GM23248 (cell line): ENCODE measurements at regions of chr11 and their contacts with region 1.

Region 1: DNA sequence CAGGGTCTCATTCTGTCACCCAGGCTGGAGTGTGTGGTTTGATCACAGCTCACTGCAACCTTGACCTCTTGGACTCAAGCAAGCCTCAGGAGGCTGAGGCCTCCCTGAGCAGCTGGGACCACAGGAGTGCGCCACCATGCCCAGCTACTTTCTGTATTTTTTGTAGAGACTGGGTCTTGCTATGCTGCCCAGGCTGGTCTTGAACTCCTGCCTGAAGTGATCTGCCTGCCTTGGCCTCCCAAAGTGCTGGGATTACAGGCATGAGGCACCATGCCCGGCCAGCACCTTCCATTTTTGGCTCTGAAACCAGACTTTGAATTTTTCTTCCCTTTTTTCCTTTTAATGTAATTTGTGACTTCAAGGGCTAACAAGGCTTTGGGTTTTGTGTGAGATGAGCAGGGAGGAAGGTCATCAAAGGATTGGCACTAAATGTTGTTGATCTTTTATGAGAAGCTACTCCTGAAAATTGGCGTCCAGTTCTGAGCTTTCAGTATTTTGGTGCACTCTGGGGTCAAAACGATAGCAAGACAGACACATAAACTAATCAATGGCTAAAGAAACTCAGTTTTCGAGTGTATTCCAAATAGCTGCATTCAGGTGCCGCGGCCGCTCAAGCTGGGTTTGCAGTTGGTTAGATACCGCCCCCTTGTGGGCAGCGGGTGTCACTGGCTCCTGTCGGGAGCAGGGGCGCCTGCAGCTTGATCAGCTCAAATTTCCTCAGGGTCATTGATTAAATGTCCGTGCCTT is 51.9 kb upstream of the CLMP start:
- DNase-seq: peak; percentile 92
- H3K4me3 ChIP-seq: peak overlapping the region; percentile 17
- H3K27ac ChIP-seq: no peak overlapping the region
- H3K4me1 ChIP-seq: peaks cover 36% of the 10 kb centered on the region
- H3K27me3 ChIP-seq: no peaks in the 10 kb centered on the region

Region 2: GRCh38 chr11:123110356-123110755 is 136.6 kb before region 1 on chr11:
- in situ Hi-C with region 1: loop called (anchors 5 kb)
- DNase-seq: no peak
- H3K4me3 ChIP-seq: no peak overlapping the region
- H3K27ac ChIP-seq: peak overlapping the region; percentile 59; the same call in 1 of the 2 replicates
- H3K4me1 ChIP-seq: peaks cover 20% of the 10 kb centered on the region
- H3K27me3 ChIP-seq: no peaks in the 10 kb centered on the region

Region 3: GRCh38 chr11:123494195-123495050 is 247.5 kb after region 1 on chr11:
- in situ Hi-C with region 1: no loop called
- DNase-seq: peak; percentile 75
- H3K4me3 ChIP-seq: peak overlapping the region; percentile 47
- H3K27ac ChIP-seq: peak overlapping the region; percentile 48
- H3K4me1 ChIP-seq: peaks cover 22% of the 10 kb centered on the region
- H3K27me3 ChIP-seq: no peaks in the 10 kb centered on the region